ENCODE measurements at regions of chr1 and their contacts with region 1.

Region 1: DNA sequence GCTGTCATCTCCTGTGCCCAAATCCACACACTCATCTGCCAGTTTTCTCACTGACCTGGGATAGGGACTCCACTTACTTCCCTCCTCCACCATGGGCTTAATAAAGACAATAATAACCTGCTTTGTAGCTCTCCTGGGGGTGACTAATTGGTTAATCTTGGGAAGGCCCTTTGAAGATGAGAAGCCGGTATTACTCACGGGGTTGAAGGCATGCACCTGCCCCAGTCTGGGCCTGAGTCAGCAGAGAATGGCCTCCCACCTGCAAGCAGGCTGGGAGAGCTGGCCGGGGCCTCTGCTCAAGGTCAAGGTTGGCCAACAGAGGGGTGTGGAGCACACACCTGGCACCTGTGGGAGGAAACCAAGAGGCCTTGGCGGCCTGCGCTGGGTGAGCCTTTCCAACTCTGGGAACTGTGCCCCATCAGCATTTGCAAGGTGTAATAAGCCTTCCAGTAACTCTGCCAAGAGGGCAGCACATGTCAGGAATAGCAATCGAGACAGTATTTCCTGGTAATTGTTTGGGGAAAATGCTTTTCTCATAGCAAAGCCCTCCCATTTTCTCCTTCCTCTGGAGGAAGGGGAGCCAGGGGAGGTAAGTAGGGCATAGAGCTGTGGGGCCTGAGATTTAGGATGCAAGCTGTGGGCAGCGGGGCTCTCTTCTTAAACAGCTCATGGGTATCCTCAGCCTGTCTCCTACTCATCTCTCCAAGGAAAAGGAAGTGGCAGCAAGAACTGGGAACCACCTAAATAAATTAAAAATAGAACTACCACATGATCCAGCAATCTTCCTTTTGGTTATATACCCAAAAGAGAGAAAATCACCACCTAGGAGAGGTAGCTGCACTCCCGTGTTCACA is 49.0 kb downstream of the TOMM20 start:
- DNase-seq: peak; percentile 82 to 95
- ATAC-seq: peak; percentile 76

Region 2: DNA sequence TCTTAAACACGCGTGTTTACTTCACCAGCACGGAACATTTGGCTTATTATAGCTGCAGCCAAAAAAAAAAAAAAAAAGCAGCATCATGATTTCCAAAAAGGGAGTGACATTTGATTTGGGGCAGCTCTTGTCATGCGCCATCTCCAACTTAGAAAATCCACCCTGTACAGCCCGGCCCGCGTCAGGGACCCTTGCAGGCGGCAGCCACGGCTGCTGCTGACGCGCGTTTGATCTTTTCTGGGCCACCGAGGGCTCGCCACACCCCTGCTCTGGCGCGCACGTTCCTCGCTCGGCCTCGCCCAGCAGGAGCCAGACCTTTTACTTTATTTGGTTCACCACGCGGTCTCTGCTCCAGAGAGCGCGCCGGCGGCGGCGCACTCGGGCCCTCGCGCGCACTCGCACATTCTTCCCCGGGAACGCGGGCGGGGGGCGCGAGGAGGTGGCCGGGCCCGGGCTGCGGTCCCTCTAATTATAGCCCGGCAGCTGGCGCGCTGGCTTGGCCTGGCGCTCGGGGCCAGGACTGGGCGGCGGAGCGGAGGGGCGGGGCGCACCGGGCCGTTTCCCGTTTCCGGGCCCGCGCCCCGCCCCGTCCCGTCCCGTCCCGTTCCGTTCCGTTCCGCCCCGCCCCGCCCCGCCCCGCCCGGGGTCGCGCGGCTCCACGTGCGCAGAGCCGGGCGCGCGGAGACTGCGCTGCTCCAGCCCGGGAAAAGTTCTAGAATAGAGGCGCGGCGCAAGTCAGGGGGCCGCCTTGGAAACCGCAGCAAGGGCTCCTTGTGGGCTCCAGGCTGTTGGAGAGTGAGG is 479.9 kb before region 1 on chr1:
- intact Hi-C with region 1: loop called (anchors 5 to 10 kb)
- DNase-seq: peak; percentile 88 to 91
- ATAC-seq: peak; percentile 74

Region 3: DNA sequence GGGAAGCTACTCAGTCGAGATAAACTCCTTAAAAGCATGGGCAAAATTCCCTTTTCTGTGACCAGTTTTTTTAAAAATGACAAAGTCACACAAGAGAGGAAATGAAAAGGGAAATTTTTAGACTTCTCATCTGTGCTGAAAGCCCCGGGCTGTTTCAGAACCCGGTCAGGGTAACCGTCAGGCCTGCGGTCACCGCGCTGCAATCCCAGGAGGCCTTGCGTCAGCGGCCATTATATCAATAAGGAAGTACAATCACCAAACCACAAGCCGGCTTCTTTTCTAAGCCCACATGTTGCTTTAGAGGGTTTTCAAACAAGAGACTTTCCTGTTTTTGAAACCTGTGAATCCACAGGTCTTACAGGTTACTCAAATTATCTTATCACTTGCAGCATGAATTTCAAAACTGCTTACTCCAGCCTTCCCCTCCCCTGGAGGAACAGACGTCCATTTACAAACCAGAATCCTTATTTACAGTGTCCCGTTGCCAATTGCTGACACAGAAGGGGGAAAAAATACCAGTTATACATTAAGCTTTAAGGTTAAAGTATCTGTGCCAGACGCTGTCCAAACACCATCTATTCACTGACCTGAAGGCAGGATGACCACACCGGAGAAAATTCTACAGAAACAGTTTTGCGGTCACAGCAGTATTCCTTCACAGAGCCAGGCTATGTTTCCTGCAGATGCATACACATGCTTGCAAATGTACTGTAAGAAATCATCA is 116.3 kb before region 1 on chr1:
- intact Hi-C with region 1: loop called in 1 of 2 experiments (anchors 5 kb)
- DNase-seq: peak; percentile 84 to 88
- ATAC-seq: peak; percentile 20

Measured in left colon (tissue), 2 donors.